Right cardiac atrium (tissue), 5 donors: ENCODE measurements at regions of chr1 and their contacts with region 1.

Region 1: DNA sequence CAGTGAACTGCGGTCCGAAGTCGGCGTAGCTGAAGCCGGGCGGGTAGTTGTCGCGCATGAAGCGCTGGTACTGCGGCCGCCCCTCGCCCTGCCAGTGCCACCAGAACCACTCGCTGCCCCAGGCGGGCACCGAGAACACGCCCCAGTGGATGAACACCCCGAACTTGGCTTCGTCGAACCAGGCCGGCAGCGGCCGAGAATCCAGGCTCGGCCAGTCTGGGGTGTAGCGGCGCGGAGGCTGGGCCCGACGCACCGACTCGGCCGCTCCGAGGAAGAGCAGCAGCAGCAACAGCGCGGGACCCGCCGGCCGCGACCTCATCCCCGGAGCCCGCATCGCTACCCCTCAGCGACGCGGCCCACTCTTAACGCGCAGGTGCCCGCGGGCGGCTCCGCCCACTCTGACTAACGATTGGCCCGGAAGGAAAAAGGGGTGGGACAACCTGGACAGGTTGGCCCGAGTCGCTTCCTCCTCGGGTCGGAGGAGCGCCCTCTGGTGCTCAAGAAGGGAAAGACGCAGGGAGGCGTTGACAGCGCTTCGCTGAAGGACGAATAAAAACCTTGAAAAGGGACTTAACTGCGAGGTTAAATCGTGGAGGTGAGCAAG is at the start of gene FUCA1:
- DNase-seq: peak; percentile 91 to 97 (median 97)
- ATAC-seq: peak; percentile 98 to 99
- H3K4me3 ChIP-seq: peak within 1 kb of the TSS; percentile 61
- H3K27ac ChIP-seq: peak within 1 kb of the TSS; percentile 46
- H3K4me1 ChIP-seq: peaks cover 2% of the 10 kb centered on the region
- H3K27me3 ChIP-seq: no peaks in the 10 kb centered on the region
- total RNA-seq, gene FUCA1: 16.8 to 22.1 (median 19.4) TPM

Region 2: GRCh38 chr1:23800400-23801337 is 67.4 kb before region 1 on chr1 and contains the start of gene GALE:
- intact Hi-C with region 1: loop called in 1 of 4 experiments (anchors 10 kb)
- DNase-seq: peak; percentile 98 to 99 (median 99)
- ATAC-seq: peak; percentile 95 to 96
- H3K4me3 ChIP-seq: peak within 1 kb of the TSS; percentile 81
- H3K27ac ChIP-seq: peak within 1 kb of the TSS; percentile 43
- H3K4me1 ChIP-seq: peaks cover 3% of the 10 kb centered on the region
- H3K27me3 ChIP-seq: no peaks in the 10 kb centered on the region
- total RNA-seq, gene GALE: 6.1 to 11.0 (median 6.7) TPM

Region 3: DNA sequence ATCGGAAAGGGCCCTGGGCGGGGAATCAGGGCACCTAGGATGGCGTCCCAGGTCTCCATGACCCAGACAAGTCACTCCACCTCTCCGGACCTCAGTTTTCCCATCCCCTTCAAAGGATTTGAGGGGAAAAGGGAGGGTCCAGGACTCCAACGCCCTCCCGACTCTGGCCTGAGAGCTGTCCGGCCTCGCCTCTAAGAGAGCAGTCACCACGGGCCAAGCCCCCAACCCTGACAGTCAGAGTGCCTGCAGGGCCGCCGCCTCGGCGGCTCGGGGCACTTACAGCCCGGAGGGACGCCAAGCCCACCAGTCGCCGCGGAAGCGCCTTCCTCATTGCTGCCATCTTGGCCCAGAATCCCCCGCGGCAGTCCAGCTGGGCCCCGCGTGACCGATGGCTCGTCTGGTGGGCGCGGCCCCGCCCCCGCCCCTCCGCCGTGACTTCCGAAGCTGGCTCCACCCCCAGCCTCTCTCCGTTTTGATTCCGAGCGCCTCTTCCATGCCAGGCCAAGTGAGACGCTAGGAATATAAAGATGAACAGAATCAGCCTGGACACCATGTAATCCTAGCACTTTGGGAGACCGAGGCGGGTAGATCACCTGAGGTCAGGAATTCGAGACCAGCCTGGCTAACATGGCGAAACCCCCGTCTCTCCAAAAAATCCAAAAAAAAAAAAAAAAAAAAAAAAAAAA is 42.8 kb before region 1 on chr1 and contains the start of gene HMGCL:
- intact Hi-C with region 1: loop called in 1 of 4 experiments (anchors 5 kb)
- DNase-seq: peak; percentile 92 to 97 (median 96)
- ATAC-seq: peak; percentile 99
- H3K4me3 ChIP-seq: peak within 1 kb of the TSS; percentile 85
- H3K27ac ChIP-seq: peak within 1 kb of the TSS; percentile 85
- H3K4me1 ChIP-seq: no peaks in the 10 kb centered on the region
- H3K27me3 ChIP-seq: no peaks in the 10 kb centered on the region
- total RNA-seq, gene HMGCL: 20.1 to 26.2 (median 21.7) TPM